Activated CD4-positive, alpha-beta memory T cell treated with anti-CD3 and anti-CD28 coated beads, Interleukin-2, amount 10 ng/mL, durations not matched to agents 7 days and 5 days (primary cell): ENCODE measurements at regions of chr11 and their contacts with region 1.

Region 1: DNA sequence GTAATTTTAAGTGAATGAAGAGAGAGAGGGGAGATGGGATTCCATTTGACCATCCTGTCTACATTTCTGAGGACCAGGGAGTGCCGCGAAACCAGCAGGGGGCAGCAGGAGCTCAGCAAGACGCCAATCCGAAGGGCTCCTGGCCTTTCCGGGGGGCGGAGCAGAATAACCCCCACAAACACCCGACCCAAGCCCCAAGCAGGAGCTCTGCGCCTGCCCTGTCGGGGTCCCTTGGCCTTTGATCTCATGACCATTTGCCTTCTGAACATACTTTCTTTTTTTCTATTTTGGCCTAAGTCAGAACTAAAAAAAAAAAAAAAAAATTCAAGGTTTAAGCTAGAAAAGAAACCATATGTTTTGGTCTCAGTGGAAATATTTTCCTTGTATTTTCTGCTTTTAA is 21.9 kb upstream of the SCN2B start:
- DNase-seq: peak; percentile 85
- H3K4me3 Mint-ChIP-seq: no peak overlapping the region
- H3K27ac Mint-ChIP-seq: peak overlapping the region; percentile 63
- H3K4me1 Mint-ChIP-seq: peaks cover 15% of the 10 kb centered on the region
- H3K27me3 Mint-ChIP-seq: no peaks in the 10 kb centered on the region

Region 2: GRCh38 chr11:118211006-118211405 is 12.6 kb after region 1 on chr11:
- CTCF ChIA-PET with region 1: interaction called, 47 read pairs
- POLR2A ChIA-PET with region 1: interaction called, 249 read pairs
- DNase-seq: no peak
- H3K4me3 Mint-ChIP-seq: no peak overlapping the region
- H3K27ac Mint-ChIP-seq: no peak overlapping the region
- H3K4me1 Mint-ChIP-seq: peaks cover 80% of the 10 kb centered on the region
- H3K27me3 Mint-ChIP-seq: no peaks in the 10 kb centered on the region

Region 3: DNA sequence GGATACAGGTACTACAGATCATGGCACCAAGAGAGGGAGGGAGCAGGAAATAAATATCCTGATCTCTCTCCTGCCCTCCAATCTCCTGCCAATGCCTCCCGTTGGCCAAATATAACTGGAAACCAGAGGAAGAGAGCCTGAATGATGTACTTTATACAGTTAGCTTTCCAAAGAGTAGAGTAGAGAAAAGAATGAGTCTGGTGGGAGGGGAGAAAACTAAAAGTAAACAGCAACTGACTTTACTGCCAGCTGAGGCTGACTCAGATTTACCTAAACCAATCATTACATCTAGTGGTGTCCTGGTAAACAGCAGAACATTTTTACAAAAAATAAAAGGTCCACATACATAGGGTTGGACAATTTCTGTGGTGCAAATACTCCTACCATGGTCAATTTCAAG is 48.7 kb after region 1 on chr11:
- CTCF ChIA-PET with region 1: interaction called, 43 read pairs
- POLR2A ChIA-PET with region 1: interaction called, 54 read pairs
- DNase-seq: no peak
- H3K4me3 Mint-ChIP-seq: peak overlapping the region; percentile 3
- H3K27ac Mint-ChIP-seq: peak overlapping the region; percentile 81
- H3K4me1 Mint-ChIP-seq: peaks cover 78% of the 10 kb centered on the region
- H3K27me3 Mint-ChIP-seq: no peaks in the 10 kb centered on the region

Region 4: GRCh38 chr11:118277306-118277705 is 78.9 kb after region 1 on chr11:
- CTCF ChIA-PET with region 1: interaction called, 17 read pairs
- POLR2A ChIA-PET with region 1: no interaction called
- DNase-seq: no peak
- H3K4me3 Mint-ChIP-seq: no peak overlapping the region
- H3K27ac Mint-ChIP-seq: peak overlapping the region; percentile 34
- H3K4me1 Mint-ChIP-seq: peaks cover 44% of the 10 kb centered on the region
- H3K27me3 Mint-ChIP-seq: peaks cover 2% of the 10 kb centered on the region

Region 5: GRCh38 chr11:118304568-118305248 is 106.3 kb after region 1 on chr11 and contains the start of gene CD3E:
- CTCF ChIA-PET with region 1: interaction called, 28 read pairs
- POLR2A ChIA-PET with region 1: interaction called, 24 read pairs
- DNase-seq: peak; percentile 80
- H3K4me3 Mint-ChIP-seq: peak within 1 kb of the TSS; percentile 99
- H3K27ac Mint-ChIP-seq: peak within 1 kb of the TSS; percentile 99
- H3K4me1 Mint-ChIP-seq: peaks cover 56% of the 10 kb centered on the region
- H3K27me3 Mint-ChIP-seq: no peaks in the 10 kb centered on the region
- total RNA-seq, gene CD3E: 639 to 653 TPM

Region 6: GRCh38 chr11:118353084-118353710 is 154.8 kb after region 1 on chr11:
- CTCF ChIA-PET with region 1: interaction called, 25 read pairs
- POLR2A ChIA-PET with region 1: no interaction called
- DNase-seq: no peak
- H3K4me3 Mint-ChIP-seq: no peak overlapping the region
- H3K27ac Mint-ChIP-seq: peak overlapping the region; percentile 51
- H3K4me1 Mint-ChIP-seq: peaks cover 20% of the 10 kb centered on the region
- H3K27me3 Mint-ChIP-seq: no peaks in the 10 kb centered on the region